K562 (cell line): ENCODE measurements at regions of chr4 and their contacts with region 1.

Region 1: DNA sequence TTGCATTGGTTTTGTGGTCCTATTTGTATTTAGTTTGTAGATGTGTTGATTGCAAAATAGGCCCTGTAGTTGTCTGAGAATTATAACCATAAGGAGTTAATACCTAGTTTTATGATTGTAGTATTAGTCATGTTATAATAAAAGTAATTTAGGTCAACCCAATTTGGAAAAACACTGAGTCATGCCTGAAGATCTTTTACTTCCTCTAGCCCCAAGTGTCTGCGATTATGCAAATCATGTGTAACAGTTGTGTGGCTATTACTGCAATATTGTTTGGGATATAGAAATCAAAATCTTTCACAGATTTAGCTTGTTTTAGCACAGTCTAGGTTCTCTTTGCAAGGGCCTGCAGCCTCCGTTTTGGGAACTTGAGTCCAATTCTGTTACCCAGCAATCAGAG is 12.6 kb downstream of the SRD5A3 start:
- DNase-seq: peak in 2 of 4 experiments; percentile 41 to 44
- ATAC-seq: peak; percentile 31
- H3K4me3 ChIP-seq: no peak overlapping the region
- H3K27ac ChIP-seq: peak overlapping the region; percentile 17; the same call in 1 of the 3 replicates
- H3K4me1 ChIP-seq: peaks cover 4 to 18% of the 10 kb centered on the region in 2 experiments; a peak in 4 of 5 replicates
- H3K27me3 ChIP-seq: no peaks in the 10 kb centered on the region
- CTCF ChIP-seq: no peak
- EP300 ChIP-seq: peak; percentile 41; the same call in 1 of the 2 replicates
- POLR2A ChIP-seq: no peak
- RAD21 ChIP-seq: no peak

Region 2: GRCh38 chr4:55143863-55144262 is 214.8 kb before region 1 on chr4:
- CTCF ChIA-PET with region 1: no interaction called
- POLR2A ChIA-PET with region 1: no interaction called
- in situ Hi-C with region 1: no loop called
- intact Hi-C with region 1: no loop called
- DNase-seq: no peak
- ATAC-seq: no peak
- H3K4me3 ChIP-seq: no peak overlapping the region
- H3K27ac ChIP-seq: no peak overlapping the region
- H3K4me1 ChIP-seq: no peaks in the 10 kb centered on the region
- H3K27me3 ChIP-seq: no peaks in the 10 kb centered on the region
- CTCF ChIP-seq: no peak
- EP300 ChIP-seq: no peak
- POLR2A ChIP-seq: no peak
- RAD21 ChIP-seq: no peak

Region 3: GRCh38 chr4:55853484-55854046 is 494.9 kb after region 1 on chr4 and contains the start of gene EXOC1:
- CTCF ChIA-PET with region 1: no interaction called
- POLR2A ChIA-PET with region 1: no interaction called
- in situ Hi-C with region 1: loop called (anchors 10 kb)
- intact Hi-C with region 1: no loop called
- DNase-seq: peak; percentile 93 to 98 (median 94)
- ATAC-seq: peak; percentile 99
- H3K4me3 ChIP-seq: peak within 1 kb of the TSS; percentile 97
- H3K27ac ChIP-seq: peak within 1 kb of the TSS; percentile 87
- H3K4me1 ChIP-seq: peaks cover 3 to 7% of the 10 kb centered on the region in 2 experiments; a peak in 2 of 5 replicates
- H3K27me3 ChIP-seq: no peaks in the 10 kb centered on the region
- CTCF ChIP-seq: no peak
- EP300 ChIP-seq: no peak
- POLR2A ChIP-seq: peak; percentile 89
- RAD21 ChIP-seq: no peak
- polyA plus RNA-seq, gene EXOC1: 16.0 to 19.5 TPM